Mammary epithelial cell (primary cell): ENCODE measurements at regions of chr22 and their contacts with region 1.

Region 1: DNA sequence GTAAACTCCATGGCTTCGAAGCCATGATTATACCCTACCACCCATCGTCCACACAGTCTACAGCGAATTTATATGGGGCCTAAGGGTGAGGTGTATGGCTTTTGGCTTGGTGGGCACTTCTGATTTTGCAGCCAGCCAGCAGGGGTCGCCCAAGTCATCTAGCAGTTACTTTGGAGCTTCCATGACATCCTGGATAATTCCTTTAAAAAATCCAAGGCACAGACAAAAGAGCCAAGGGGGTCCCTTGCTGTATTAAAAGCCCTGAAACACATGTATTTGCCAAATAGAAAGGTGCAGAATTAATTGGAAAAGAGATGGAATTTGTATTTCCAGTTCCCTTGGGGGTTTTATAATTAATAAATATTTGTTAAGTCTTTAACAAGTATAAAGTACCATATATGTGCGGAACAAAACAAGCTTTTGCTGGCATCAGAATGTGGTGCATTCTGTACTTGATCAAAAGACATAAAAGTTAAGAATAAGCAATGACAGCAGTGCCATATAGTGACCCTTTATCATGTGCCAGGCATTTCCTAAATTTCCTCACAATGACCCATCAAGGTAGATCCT is 132.8 kb upstream of the PITPNB start:
- DNase-seq: peak; percentile 25
- H3K4me3 ChIP-seq: no peak overlapping the region
- H3K27ac ChIP-seq: no peak overlapping the region
- H3K4me1 ChIP-seq: no peaks in the 10 kb centered on the region
- H3K27me3 ChIP-seq: peaks cover 2% of the 10 kb centered on the region
- CTCF ChIP-seq: peak; percentile 82 to 91

Region 2: DNA sequence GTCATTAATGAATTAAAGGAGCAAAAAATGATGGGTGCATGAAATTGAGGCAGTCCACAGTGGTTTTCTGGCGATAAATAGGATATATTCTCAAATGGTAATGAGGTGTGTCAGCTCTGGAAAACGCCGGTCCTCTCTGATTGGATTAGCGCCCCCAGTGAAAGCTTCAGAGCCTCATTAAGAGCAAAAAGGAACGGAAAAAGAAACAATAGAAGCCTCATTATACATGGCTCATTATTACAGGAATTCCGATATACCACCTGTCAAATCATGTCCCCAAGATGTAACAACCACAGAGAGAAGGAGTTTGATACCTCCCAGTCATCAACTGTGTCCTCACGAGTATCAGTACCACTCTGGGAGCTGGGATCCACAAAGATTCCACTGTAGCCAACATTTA is 42.9 kb after region 1 on chr22:
- CTCF ChIA-PET with region 1: no interaction called
- dilution Hi-C with region 1: no loop called
- in situ Hi-C with region 1: no loop called
- intact Hi-C with region 1: no loop called
- DNase-seq: no peak
- H3K4me3 ChIP-seq: no peak overlapping the region
- H3K27ac ChIP-seq: no peak overlapping the region
- H3K4me1 ChIP-seq: no peaks in the 10 kb centered on the region
- H3K27me3 ChIP-seq: no peaks in the 10 kb centered on the region
- CTCF ChIP-seq: no peak

Region 3: DNA sequence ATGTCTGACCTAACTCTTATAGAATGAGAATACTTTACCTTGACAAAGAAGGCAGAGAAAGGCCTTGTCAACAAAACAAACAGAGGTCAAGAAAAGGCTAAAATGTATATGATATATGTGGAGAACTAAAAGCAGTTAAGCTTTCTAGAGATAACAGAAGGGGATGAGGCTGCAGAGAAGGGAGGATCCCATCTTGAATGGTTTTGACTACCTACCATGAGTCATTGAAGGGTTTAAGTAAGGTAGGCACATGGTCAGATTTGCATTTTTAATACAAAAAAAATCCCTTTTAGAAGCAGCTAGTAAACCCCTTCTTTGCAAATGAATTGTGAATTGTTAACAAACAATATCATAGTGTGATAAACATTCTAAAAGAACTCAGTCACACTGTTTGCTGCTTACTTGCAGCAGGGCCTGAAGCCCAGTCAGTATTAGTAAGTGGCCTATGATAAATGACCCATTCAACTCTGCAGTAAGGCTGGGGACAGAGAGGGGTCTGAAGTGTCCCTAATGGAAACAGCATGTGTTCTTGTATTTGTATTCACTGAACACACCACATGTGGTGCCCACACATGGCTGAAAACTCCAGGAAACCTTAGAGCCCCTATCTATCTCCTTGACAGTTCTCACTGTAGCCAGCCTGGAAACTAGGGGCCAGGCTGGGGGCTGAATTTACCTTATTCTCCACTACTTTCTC is 195.9 kb after region 1 on chr22:
- CTCF ChIA-PET with region 1: interaction called, 3 read pairs
- dilution Hi-C with region 1: no loop called
- in situ Hi-C with region 1: no loop called
- intact Hi-C with region 1: loop called (anchors 1 kb)
- DNase-seq: no peak
- H3K4me3 ChIP-seq: no peak overlapping the region
- H3K27ac ChIP-seq: no peak overlapping the region
- H3K4me1 ChIP-seq: no peaks in the 10 kb centered on the region
- H3K27me3 ChIP-seq: no peaks in the 10 kb centered on the region
- CTCF ChIP-seq: no peak